K562 (cell line): ENCODE measurements at regions of chr1 and their contacts with region 1.

Region 1: GRCh38 chr1:15258833-15259621 is 12.0 kb downstream of the FHAD1 start:
- DNase-seq: peak in 1 of 4 experiments; percentile 34
- ATAC-seq: peak; percentile 63
- H3K4me3 ChIP-seq: no peak overlapping the region
- H3K27ac ChIP-seq: no peak overlapping the region
- H3K4me1 ChIP-seq: peaks cover 6 to 23% of the 10 kb centered on the region in 2 experiments; a peak in 4 of 5 replicates
- H3K27me3 ChIP-seq: peaks cover 4 to 27% of the 10 kb centered on the region in 2 experiments; a peak in 3 of 5 replicates
- CTCF ChIP-seq: no peak
- EP300 ChIP-seq: peak; percentile 16; the same call in 1 of the 2 replicates
- POLR2A ChIP-seq: no peak
- RAD21 ChIP-seq: no peak

Region 2: DNA sequence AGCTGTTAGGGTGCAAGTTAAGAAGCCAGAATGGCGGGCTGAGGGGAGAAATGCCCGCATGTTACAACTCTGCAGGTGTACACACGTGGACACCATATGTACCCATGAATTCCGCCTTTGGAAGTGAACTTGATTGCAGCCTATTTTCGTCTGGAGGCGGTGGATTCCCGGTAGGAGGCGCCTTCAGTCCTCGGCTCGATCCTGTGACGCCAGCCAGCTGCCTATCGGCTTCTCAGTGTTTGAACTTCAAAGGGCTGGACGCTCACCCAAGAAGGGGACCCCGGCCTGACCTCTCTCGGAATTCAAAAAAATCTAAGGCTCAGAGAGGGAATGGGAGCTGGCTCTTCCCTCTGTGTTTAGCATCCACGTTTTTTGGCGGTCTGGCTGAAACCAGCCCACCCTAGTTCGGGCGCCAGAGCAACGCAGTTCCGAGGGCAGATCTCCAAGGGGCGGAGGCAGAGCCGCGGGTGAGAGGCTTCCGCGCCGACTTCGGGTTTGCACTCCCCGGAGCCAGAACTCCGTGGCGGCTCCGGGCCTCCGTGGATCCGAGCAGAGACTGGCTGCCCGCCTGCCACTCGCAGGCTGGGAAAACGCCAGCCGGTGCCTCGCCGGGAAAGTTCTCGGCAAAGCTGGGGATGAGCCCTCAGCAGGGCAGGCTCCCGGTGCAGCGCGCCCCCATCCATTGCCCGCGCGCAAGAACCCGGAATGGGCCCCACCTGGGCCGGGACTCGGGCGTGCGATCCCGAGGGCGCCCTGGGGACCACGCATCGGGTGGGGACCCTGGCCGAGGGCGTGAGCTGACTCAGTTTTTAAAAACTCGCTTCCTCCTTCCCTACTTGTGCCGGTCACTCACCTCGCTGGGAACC is 106.5 kb before region 1 on chr1:
- CTCF ChIA-PET with region 1: no interaction called
- POLR2A ChIA-PET with region 1: no interaction called
- in situ Hi-C with region 1: loop called (anchors 5 kb)
- intact Hi-C with region 1: no loop called
- DNase-seq: peak; percentile 65 to 81 (median 74)
- ATAC-seq: peak; percentile 84
- H3K4me3 ChIP-seq: peak overlapping the region; percentile 23
- H3K27ac ChIP-seq: no peak overlapping the region
- H3K4me1 ChIP-seq: peaks cover 6 to 26% of the 10 kb centered on the region in 2 experiments
- H3K27me3 ChIP-seq: peaks cover 16 to 82% of the 10 kb centered on the region in 2 experiments; a peak in 4 of 5 replicates
- CTCF ChIP-seq: peak; percentile 73 to 90 (median 82)
- EP300 ChIP-seq: no peak; the same call in 1 of the 2 replicates
- POLR2A ChIP-seq: no peak
- RAD21 ChIP-seq: peak; percentile 83 to 92

Region 3: GRCh38 chr1:15168479-15168878 is 90.5 kb before region 1 on chr1:
- CTCF ChIA-PET with region 1: no interaction called
- POLR2A ChIA-PET with region 1: no interaction called
- in situ Hi-C with region 1: no loop called
- intact Hi-C with region 1: no loop called
- DNase-seq: no peak
- ATAC-seq: no peak
- H3K4me3 ChIP-seq: no peak overlapping the region
- H3K27ac ChIP-seq: no peak overlapping the region
- H3K4me1 ChIP-seq: peaks cover 0 to 4% of the 10 kb centered on the region in 2 experiments; a peak in 2 of 5 replicates
- H3K27me3 ChIP-seq: peaks cover 13 to 32% of the 10 kb centered on the region in 2 experiments; a peak in 3 of 5 replicates
- CTCF ChIP-seq: no peak
- EP300 ChIP-seq: no peak
- POLR2A ChIP-seq: no peak
- RAD21 ChIP-seq: no peak